Activated CD8-positive, alpha-beta T cell treated with anti-CD3 and anti-CD28 coated beads for 36 hours (primary cell): ENCODE measurements at regions of chr1 and their contacts with region 1.

Region 1: GRCh38 chr1:180482425-180483275 is 19.7 kb downstream of the ACBD6 start:
- DNase-seq: peak; percentile 17
- ATAC-seq: no peak
- H3K4me3 Mint-ChIP-seq: no peak overlapping the region
- H3K27ac Mint-ChIP-seq: no peak overlapping the region
- H3K4me1 Mint-ChIP-seq: peaks cover 16% of the 10 kb centered on the region
- H3K27me3 Mint-ChIP-seq: no peaks in the 10 kb centered on the region
- CTCF ChIP-seq: peak; percentile 80

Region 2: DNA sequence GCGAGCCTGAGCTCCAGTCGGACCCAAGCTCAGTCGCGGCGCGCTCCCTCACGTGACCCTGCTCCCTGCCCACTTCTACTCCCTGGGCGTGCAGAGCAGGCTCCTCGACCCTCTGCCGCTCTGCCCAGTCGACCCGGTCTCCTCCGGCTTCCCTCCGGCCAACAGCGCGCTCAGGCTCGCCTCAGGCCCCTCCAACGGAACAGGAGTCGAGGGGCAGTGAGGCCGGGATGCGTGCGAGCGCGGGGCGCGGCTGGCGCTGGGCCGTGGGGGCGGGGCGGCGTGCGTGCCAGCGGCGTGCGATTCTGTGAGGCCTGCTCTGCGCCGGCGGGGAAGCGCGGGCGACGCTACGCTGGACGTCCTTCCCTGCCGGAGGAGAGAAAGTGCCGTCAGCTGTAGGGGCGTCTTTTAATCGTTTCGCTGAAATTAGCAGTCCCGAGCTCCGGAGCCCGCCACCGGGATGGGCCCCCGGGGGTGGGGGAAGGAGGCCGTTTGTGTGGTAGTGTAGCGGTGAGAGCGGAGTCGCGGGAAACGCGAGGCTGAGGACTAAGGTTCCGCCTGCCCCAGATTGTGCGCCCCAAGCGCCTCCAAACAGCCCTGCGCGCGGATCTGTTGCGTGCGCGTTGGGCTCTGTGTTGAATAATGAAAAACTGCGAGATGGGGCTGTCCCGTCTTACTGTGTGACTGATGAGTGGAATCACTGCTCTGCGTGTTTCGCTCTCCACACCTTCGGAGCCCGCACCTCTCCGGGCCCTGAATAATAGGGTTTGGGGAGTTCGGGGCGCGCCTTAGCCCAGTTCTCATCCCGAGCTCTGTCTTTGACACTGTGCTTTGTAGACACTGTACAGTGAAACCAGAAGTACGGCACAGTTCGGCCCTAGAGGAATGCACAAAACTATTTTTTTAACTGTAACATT is 20.0 kb after region 1 on chr1 and contains the start of gene ACBD6:
- CTCF ChIA-PET with region 1: interaction called, 18 read pairs
- POLR2A ChIA-PET with region 1: no interaction called
- intact Hi-C with region 1: no loop called
- DNase-seq: peak; percentile 92
- ATAC-seq: peak; percentile 94
- H3K4me3 Mint-ChIP-seq: peak within 1 kb of the TSS; percentile 96
- H3K27ac Mint-ChIP-seq: peak within 1 kb of the TSS; percentile 97
- H3K4me1 Mint-ChIP-seq: peaks cover 24% of the 10 kb centered on the region
- H3K27me3 Mint-ChIP-seq: no peaks in the 10 kb centered on the region
- CTCF ChIP-seq: no peak
- total RNA-seq, gene ACBD6: 41.3 to 45.0 TPM